ENCODE measurements at regions of chr17 and their contacts with region 1.

Region 1: GRCh38 chr17:48878918-48879898 is 13.4 kb upstream of the ATP5MC1 start:
- DNase-seq: peak; percentile 80

Region 2: GRCh38 chr17:48816774-48817590 is 62.2 kb before region 1 on chr17 and contains the start of gene TTLL6:
- in situ Hi-C with region 1: loop called (anchors 10 kb)
- DNase-seq: peak; percentile 86

Measured in KBM-7 (cell line).